ENCODE measurements at regions of chr5 and their contacts with region 1.

Region 1: DNA sequence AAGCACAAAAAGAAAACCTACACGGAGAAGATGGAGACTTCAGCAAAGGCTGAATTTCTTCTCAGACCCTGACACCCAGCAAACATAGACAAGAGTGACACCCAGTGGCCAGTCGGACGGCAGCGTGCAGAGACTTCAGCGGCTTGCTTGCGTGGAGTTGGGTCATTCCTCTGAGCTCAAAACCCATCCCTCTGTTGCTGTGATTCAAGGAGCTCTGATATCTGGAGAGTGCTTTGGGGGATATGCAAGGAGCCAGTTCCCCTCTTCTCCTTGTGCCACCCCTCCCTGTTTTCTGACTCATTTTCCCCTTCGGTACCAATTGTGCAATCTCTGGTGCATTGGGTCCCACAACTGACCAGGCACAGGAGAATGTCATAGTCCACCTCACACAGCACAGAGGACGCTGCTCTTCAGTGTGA is 27.5 kb downstream of the SH3TC2 start:
- DNase-seq: peak; percentile 79
- H3K4me3 Mint-ChIP-seq: no peak overlapping the region
- H3K27ac Mint-ChIP-seq: no peak overlapping the region
- H3K4me1 Mint-ChIP-seq: peaks cover 42% of the 10 kb centered on the region
- H3K27me3 Mint-ChIP-seq: no peaks in the 10 kb centered on the region

Region 2: GRCh38 chr5:148820461-148821395 is 214.7 kb before region 1 on chr5:
- CTCF ChIA-PET with region 1: interaction called, 11 read pairs
- POLR2A ChIA-PET with region 1: interaction called, 3 read pairs
- DNase-seq: no peak
- H3K4me3 Mint-ChIP-seq: no peak overlapping the region
- H3K27ac Mint-ChIP-seq: no peak overlapping the region
- H3K4me1 Mint-ChIP-seq: peaks cover 9% of the 10 kb centered on the region
- H3K27me3 Mint-ChIP-seq: peaks cover 28% of the 10 kb centered on the region

Region 3: DNA sequence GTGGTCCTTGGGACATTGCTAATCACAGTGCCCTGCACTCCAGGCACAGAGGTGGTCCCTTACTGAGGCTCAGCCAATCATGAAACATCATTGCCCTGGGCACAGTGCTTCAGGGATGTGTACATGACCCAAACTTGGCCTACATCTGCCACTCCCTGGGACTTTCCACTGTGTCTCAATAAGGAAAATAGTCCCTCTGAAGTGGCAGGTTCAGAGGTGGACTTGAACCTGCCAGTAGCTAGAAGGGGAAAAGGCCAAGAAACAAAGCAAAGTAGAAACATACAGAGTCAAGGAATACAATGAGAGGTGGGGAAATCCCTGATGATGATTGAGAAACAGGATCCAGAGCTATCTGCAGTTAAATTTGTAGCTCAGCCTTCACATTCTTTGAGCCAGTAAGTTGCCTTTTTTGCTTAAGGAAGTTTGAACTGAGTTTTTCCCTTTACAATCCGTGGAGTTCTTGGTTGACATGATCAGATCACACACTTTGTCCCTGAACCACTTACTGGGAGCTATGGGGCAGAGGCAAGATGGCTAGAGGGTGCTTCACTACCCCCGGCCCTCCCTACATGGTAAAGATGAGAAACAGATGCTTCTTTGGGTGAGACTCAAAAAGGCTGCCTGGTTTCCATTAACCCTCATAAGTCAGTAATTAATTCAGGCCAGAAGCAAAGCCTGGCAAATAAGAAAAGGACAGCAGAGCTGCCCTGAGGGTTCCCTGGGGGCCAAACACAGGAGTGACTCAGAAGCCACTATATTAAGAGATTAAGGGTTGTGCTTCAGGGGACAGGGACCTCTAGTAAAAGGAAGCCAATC is 30.1 kb before region 1 on chr5:
- CTCF ChIA-PET with region 1: interaction called, 16 read pairs
- POLR2A ChIA-PET with region 1: no interaction called
- DNase-seq: no peak
- H3K4me3 Mint-ChIP-seq: no peak overlapping the region
- H3K27ac Mint-ChIP-seq: no peak overlapping the region
- H3K4me1 Mint-ChIP-seq: no peaks in the 10 kb centered on the region
- H3K27me3 Mint-ChIP-seq: peaks cover 9% of the 10 kb centered on the region

Region 4: GRCh38 chr5:149011074-149011476 is 24.3 kb before region 1 on chr5:
- CTCF ChIA-PET with region 1: interaction called, 16 read pairs
- POLR2A ChIA-PET with region 1: no interaction called
- DNase-seq: no peak
- H3K4me3 Mint-ChIP-seq: no peak overlapping the region
- H3K27ac Mint-ChIP-seq: no peak overlapping the region
- H3K4me1 Mint-ChIP-seq: no peaks in the 10 kb centered on the region
- H3K27me3 Mint-ChIP-seq: no peaks in the 10 kb centered on the region

Region 5: GRCh38 chr5:149024477-149024876 is 10.9 kb before region 1 on chr5:
- CTCF ChIA-PET with region 1: interaction called, 10 read pairs
- POLR2A ChIA-PET with region 1: no interaction called
- DNase-seq: no peak
- H3K4me3 Mint-ChIP-seq: no peak overlapping the region
- H3K27ac Mint-ChIP-seq: no peak overlapping the region
- H3K4me1 Mint-ChIP-seq: peaks cover 1% of the 10 kb centered on the region
- H3K27me3 Mint-ChIP-seq: peaks cover 19% of the 10 kb centered on the region